AG04450 (cell line): ENCODE measurements at regions of chr13 and their contacts with region 1.

Region 1: DNA sequence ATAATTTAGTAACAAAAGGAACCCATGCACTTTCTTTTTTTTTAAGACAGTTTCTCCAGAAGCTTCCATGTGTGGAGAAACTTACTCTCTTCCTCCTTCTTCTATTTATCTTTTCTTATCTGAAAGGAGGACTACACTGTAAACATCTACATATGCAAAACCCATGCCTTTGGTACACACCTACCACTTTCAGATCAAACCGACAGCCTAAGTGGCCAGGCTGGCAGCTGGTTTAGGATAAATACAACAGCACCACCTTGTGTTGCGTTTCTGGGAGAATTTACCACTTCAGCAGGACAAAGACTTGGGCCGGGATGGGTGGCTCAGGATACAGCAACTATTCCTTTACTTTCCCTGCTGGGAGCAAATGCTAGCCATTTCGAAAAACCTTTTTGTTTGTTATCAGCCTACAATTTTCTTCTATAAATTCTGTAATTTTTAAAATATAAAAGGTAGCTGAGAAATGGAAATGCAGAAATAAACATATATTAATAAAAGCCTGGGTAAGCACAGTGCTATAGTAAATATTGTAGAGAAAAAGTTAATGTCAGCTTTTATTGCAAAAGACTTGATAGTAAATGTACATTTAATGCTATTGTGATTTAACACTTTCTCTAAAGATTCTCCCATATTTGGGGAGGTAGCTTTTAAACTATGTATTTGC is 94.0 kb upstream of the RFC3 start:
- DNase-seq: peak; percentile 69
- H3K4me3 ChIP-seq: no peak overlapping the region
- H3K27ac ChIP-seq: no peak overlapping the region
- H3K27me3 ChIP-seq: no peaks in the 10 kb centered on the region
- CTCF ChIP-seq: peak; percentile 76

Region 2: DNA sequence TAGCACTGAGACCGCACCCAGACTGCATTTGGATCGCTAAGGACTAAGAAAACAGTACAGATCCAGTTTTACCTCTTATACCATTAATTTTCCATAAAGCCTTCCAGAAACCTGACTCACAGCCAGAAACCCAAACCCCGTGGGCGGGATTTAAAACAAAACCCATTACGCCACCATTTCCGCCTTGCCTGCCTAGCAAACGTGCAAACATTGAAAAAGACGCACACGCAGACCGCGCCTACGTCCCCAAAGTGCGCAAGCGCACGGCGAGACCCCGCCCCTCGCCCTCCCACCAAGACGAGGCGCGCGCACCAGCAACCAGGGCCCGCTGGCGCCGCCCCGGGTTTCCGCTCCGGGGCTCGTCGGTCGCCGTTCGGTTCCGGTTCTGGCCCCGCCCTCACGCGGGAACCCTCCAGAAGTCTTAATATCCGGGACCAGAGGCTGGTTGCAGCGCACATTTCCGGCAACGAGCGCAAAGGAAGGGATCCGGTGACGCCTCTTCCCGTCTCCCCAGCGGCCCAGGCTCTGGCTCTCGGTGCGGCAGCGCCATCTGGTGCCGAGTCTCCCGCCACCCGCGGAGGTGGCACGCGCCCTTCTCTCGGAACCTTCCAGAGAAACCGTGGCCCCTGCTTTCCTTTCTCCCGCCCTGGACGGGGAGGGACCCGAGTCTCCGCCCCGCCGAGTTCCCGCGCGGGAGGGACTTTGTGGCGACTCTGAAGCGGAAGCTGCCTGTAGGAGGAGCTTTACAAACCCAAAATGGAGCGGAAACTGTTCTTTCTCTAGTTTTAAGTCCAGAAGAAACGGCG is 181.4 kb before region 1 on chr13:
- CTCF ChIA-PET with region 1: interaction called, 63 read pairs
- POLR2A ChIA-PET with region 1: no interaction called
- DNase-seq: peak; percentile 99
- H3K4me3 ChIP-seq: peak overlapping the region; percentile 56
- H3K27ac ChIP-seq: peak overlapping the region; percentile 96
- H3K27me3 ChIP-seq: no peaks in the 10 kb centered on the region
- CTCF ChIP-seq: peak; percentile 85

Region 3: GRCh38 chr13:33606692-33607091 is 117.2 kb before region 1 on chr13:
- CTCF ChIA-PET with region 1: interaction called, 17 read pairs
- POLR2A ChIA-PET with region 1: no interaction called
- DNase-seq: no peak
- H3K4me3 ChIP-seq: no peak overlapping the region
- H3K27ac ChIP-seq: no peak overlapping the region
- H3K27me3 ChIP-seq: no peaks in the 10 kb centered on the region
- CTCF ChIP-seq: no peak

Region 4: GRCh38 chr13:33735276-33735675 is 11.4 kb after region 1 on chr13:
- CTCF ChIA-PET with region 1: interaction called, 11 read pairs
- POLR2A ChIA-PET with region 1: no interaction called
- DNase-seq: no peak
- H3K4me3 ChIP-seq: no peak overlapping the region
- H3K27ac ChIP-seq: no peak overlapping the region
- H3K27me3 ChIP-seq: peaks cover 5% of the 10 kb centered on the region
- CTCF ChIP-seq: no peak

Region 5: DNA sequence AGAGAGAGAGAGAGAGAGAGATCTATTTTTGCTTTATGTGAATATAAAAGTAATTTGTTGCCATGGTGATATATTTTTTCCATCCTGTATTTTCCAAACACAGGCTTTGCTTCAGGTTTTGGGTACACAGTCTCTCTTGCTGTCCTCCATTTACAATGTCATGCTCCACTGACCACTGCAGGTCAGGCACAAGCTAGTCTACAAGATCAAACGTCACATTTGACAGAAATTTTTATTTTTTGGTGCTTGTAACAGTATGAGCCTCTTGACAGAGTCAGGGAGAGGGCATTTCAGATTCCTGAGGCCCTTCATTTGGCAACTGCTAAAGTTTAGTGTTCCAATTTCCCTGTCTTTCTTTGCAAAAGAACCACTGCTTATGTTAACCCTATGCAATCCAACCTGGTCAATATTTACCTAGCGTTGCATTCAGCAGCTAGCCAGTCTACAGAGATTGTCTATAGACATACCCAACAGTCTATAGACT is 269.0 kb after region 1 on chr13:
- CTCF ChIA-PET with region 1: no interaction called
- POLR2A ChIA-PET with region 1: no interaction called
- DNase-seq: no peak
- H3K4me3 ChIP-seq: no peak overlapping the region
- H3K27ac ChIP-seq: no peak overlapping the region
- H3K27me3 ChIP-seq: no peaks in the 10 kb centered on the region
- CTCF ChIP-seq: no peak